Mammary epithelial cell (primary cell): ENCODE measurements at regions of chr3 and their contacts with region 1.

Region 1: DNA sequence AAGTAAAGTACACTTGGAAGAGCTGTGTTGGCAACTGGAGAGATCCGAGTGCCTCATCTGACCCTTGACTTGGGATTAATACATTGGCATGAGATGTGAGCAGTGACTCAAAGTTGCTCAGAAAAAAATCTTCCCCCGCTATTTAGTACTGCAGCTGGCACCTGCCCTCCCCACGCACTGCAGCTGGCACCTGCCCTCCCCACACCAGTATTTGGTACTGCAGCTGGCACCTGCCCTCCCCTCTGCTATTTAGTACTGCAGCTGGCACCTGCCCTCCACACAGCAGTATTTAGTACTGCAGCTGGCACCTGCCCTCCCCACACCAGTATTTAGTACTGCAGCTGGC is 3.9 kb upstream of the MUC20 start:
- DNase-seq: peak; percentile 64
- H3K4me3 ChIP-seq: no peak overlapping the region
- H3K27ac ChIP-seq: no peak overlapping the region
- H3K4me1 ChIP-seq: no peaks in the 10 kb centered on the region
- H3K27me3 ChIP-seq: peaks cover 6% of the 10 kb centered on the region
- CTCF ChIP-seq: no peak

Region 2: DNA sequence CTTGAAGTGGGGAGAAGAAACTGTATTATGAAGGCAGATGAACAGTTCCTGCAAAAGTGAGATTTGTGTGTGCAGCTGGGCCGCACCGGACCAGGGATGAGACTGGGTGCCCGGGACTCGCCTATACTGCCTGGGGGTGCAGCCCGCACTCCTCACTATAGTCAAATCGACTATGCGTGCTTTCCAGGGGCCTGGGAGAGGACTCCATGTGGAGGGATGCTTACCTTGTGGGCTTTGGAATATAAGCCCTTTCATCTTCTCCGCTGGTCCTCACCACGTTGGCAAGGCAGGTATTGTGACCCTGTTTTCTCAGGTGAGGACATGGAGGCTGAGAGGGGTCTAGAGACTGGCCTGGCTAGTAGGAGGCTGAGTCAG is 100.1 kb before region 1 on chr3:
- CTCF ChIA-PET with region 1: no interaction called
- dilution Hi-C with region 1: loop called (anchors 5 kb)
- in situ Hi-C with region 1: no loop called
- intact Hi-C with region 1: no loop called
- DNase-seq: no peak
- H3K4me3 ChIP-seq: no peak overlapping the region
- H3K27ac ChIP-seq: no peak overlapping the region
- H3K4me1 ChIP-seq: no peaks in the 10 kb centered on the region
- H3K27me3 ChIP-seq: no peaks in the 10 kb centered on the region
- CTCF ChIP-seq: no peak

Region 3: DNA sequence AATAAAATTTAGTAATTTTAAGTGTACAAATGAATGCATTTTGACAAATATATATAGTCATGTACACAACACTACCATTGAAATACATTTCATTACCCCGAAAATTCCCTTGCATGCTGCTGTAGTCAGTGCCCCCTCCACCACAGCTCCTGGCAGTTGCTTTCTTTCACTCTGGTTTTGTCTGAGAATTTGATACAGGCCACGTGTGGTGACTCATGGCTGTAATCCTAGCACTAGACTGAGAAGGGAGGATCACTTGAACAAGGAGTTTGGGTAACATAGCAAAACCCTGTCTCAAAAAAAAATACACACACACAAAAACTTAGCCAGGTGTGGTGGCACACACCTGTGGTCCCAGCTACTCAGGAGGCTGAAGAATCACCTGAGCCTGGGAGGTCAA is 299.6 kb after region 1 on chr3:
- CTCF ChIA-PET with region 1: no interaction called
- dilution Hi-C with region 1: loop called (anchors 10 kb)
- in situ Hi-C with region 1: no loop called
- intact Hi-C with region 1: no loop called
- DNase-seq: peak; percentile 85
- H3K4me3 ChIP-seq: no peak overlapping the region
- H3K27ac ChIP-seq: no peak overlapping the region
- H3K4me1 ChIP-seq: no peaks in the 10 kb centered on the region
- H3K27me3 ChIP-seq: peaks cover 2% of the 10 kb centered on the region
- CTCF ChIP-seq: no peak